ENCODE measurements at regions of chr22 and their contacts with region 1.

Region 1: GRCh38 chr22:31295831-31296657 is 3.8 kb upstream of the PIK3IP1 start:
- DNase-seq: peak in 1 of 14 experiments; percentile 33
- ATAC-seq: no peak
- H3K4me3 ChIP-seq: peak overlapping the region; percentile 22
- H3K4me3 Mint-ChIP-seq: peak overlapping the region; percentile 73
- H3K27ac ChIP-seq: peak overlapping the region in 1 of 2 donors; percentile 5
- H3K27ac Mint-ChIP-seq: peak overlapping the region; percentile 73
- H3K4me1 ChIP-seq: peaks cover 41% of the 10 kb centered on the region
- H3K4me1 Mint-ChIP-seq: peaks cover 69% of the 10 kb centered on the region
- H3K27me3 ChIP-seq: no peaks in the 10 kb centered on the region
- H3K27me3 Mint-ChIP-seq: no peaks in the 10 kb centered on the region
- CTCF ChIP-seq: no peak

Region 2: GRCh38 chr22:31099841-31100761 is 195.9 kb before region 1 on chr22:
- CTCF ChIA-PET with region 1: no interaction called
- POLR2A ChIA-PET with region 1: no interaction called
- intact Hi-C with region 1: no loop called
- DNase-seq: no peak
- ATAC-seq: no peak
- H3K4me3 ChIP-seq: no peak overlapping the region
- H3K4me3 Mint-ChIP-seq: no peak overlapping the region
- H3K27ac ChIP-seq: no peak overlapping the region
- H3K27ac Mint-ChIP-seq: no peak overlapping the region
- H3K4me1 ChIP-seq: no peaks in the 10 kb centered on the region
- H3K4me1 Mint-ChIP-seq: no peaks in the 10 kb centered on the region
- H3K27me3 ChIP-seq: no peaks in the 10 kb centered on the region
- H3K27me3 Mint-ChIP-seq: no peaks in the 10 kb centered on the region
- CTCF ChIP-seq: no peak

Region 3: DNA sequence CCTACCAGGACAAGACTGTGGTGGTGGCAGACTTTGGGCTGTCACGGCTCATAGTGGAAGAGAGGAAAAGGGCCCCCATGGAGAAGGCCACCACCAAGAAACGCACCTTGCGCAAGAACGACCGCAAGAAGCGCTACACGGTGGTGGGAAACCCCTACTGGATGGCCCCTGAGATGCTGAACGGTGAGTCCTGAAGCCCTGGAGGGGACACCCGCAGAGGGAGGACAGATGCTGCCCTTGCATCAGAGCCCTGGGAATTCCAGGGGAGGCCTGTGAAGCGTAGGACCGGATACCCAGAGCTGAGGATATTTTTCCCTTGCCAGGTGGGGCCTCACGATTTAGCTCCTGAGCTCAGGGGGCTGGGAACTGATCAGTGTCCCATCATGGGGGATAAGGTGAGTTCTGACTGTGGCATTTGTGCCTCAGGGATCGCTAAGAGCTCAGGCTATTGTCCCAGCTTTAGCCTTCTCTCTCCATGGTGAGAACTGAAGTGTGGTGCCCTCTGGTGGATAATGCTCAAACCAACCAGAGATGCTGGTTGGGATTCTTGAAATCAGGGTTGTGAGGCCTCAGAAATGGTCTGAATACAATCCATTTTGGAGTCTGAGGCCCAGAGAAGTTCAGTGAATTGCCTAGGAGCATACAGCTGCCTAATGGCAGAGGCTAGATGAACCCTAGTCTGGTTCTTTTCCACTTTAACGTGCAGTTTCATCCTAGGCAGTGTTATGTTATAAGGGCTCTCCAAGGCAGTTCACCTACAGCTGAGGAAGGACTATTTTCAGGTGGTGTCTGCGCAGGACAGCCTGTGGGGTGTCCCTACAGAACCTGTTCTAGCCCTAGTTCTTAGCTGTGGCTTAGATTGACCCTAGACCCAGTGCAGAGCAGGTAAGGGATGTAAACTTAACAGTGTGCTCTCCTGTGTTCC is 23.3 kb before region 1 on chr22:
- CTCF ChIA-PET with region 1: interaction called, 27 read pairs
- POLR2A ChIA-PET with region 1: interaction called, 1,064 read pairs
- intact Hi-C with region 1: loop called in 1 of 2 experiments (anchors 2 kb)
- DNase-seq: peak in 9 of 14 experiments; percentile 38 to 79 (median 57)
- ATAC-seq: peak; percentile 70
- H3K4me3 ChIP-seq: no peak overlapping the region
- H3K4me3 Mint-ChIP-seq: peak overlapping the region; percentile 45
- H3K27ac ChIP-seq: peak overlapping the region in 1 of 2 donors; percentile 3
- H3K27ac Mint-ChIP-seq: peak overlapping the region; percentile 88
- H3K4me1 ChIP-seq: peaks cover 62% of the 10 kb centered on the region
- H3K4me1 Mint-ChIP-seq: peaks cover 74% of the 10 kb centered on the region
- H3K27me3 ChIP-seq: no peaks in the 10 kb centered on the region
- H3K27me3 Mint-ChIP-seq: no peaks in the 10 kb centered on the region
- CTCF ChIP-seq: peak; percentile 78

Measured in CD4-positive, alpha-beta T cell (primary cell).